HCT116 (cell line): ENCODE measurements at regions of chr6 and their contacts with region 1.

Region 1: DNA sequence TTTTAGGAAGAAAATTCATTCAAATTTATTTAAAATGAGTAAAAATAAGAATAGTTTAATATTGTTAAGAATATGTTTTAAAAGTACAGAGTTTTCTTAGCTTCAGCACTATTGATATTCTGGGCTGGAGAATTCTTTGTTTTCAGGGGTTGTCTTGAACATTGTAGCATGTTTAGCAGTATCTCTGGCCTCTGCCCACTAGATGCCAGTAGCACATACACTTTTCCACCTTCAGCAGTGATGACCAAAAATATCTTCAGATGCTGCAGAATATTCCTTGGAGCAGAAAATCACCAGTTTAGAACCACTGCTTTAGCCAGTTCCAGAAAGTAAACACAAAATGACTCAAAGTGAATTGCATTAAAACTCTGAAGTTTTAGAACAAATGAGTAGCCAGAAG is 19.4 kb upstream of the SDHAF4 start:
- DNase-seq: no peak
- ATAC-seq: peak; percentile 63
- H3K4me3 ChIP-seq: no peak overlapping the region
- H3K27ac ChIP-seq: no peak overlapping the region
- H3K4me1 ChIP-seq: no peaks in the 10 kb centered on the region
- H3K27me3 ChIP-seq: no peaks in the 10 kb centered on the region
- CTCF ChIP-seq: peak; percentile 19 to 49 (median 35); a peak in 4 of 6 replicates
- POLR2A ChIP-seq: no peak
- RAD21 ChIP-seq: peak; percentile 53

Region 2: DNA sequence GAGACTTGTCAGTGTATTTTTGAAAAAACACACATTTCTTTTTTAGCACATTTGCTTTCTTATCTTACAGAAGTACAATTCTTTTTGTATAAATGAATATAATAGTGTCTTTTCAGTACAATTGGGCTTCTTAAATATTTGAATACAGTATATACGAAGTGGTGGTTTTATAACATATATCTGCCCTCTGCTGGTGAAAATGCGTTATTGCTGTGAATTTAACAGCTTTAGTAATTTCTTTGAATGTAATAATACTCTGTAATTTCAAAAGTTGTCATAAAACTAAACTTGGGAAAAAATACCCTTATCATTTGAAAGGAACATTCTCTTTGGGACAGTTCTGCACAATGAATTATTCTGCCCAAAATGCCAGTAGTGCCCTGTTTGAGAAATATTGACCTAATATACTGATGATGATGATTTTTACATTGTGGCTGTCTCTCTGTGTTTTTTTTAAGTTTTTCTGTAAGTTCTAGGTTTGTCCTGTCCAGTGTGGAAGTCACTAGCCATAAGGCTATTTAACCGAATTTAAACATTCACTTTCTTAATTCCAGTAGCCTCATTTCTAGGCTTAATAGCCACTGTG is 139.3 kb after region 1 on chr6:
- CTCF ChIA-PET with region 1: interaction called, 10 read pairs
- POLR2A ChIA-PET with region 1: no interaction called
- RAD21 ChIA-PET with region 1: no interaction called
- intact Hi-C with region 1: loop called (anchors 2 kb)
- DNase-seq: no peak
- ATAC-seq: peak; percentile 62; the same call in 1 of the 2 replicates
- H3K4me3 ChIP-seq: no peak overlapping the region
- H3K27ac ChIP-seq: no peak overlapping the region
- H3K4me1 ChIP-seq: peaks cover 0 to 4% of the 10 kb centered on the region in 2 experiments; a peak in 1 of 4 replicates
- H3K27me3 ChIP-seq: no peaks in the 10 kb centered on the region
- CTCF ChIP-seq: peak; percentile 45 to 78 (median 58); a peak in 4 of 6 replicates
- POLR2A ChIP-seq: no peak
- RAD21 ChIP-seq: peak; percentile 65

Region 3: DNA sequence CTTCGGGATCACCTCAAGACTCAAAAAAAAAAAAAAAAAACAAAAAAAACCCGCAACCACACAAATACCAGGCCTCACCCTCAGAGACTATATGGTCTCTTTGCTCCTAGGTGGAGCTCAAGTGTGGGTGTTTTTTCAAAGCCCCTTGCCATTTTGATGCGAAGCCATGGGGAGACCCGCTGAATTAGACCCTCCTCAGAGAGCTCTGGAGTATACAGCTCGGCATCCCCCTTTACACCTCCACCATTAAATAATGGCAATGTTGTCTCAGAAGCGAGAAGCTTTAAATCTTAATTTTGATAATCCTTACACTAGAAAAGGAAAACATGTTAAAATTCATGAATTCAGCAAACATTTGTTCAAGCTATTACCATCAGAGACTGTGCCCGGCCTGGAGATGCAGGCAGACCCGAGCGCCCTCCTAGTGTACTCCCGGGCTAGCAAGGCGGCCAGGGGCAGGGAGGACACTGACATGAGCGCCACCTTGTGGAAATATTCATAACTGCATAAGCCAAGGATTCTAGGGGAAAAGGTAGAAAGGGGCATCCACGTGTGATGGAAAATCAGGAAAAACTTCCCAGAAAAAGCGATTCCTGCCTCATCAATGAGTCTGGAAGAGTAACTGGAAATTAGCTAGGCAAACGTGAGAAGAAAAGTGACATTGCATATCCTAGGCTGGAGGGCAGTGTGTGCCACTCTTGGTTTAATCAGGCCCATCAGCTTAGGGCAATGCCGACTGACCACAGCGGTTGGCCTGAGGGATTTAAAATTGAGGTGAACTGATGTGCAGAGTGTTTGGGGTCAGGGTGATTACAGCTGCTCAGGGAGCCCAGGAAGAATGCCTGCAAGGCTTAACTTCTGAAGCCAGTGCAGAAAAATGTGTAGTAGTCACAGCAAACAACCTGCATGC is 337.0 kb after region 1 on chr6:
- CTCF ChIA-PET with region 1: no interaction called
- POLR2A ChIA-PET with region 1: no interaction called
- RAD21 ChIA-PET with region 1: no interaction called
- intact Hi-C with region 1: loop called (anchors 1 kb)
- DNase-seq: peak; percentile 32
- ATAC-seq: peak; percentile 98
- H3K4me3 ChIP-seq: no peak overlapping the region
- H3K27ac ChIP-seq: no peak overlapping the region
- H3K4me1 ChIP-seq: no peaks in the 10 kb centered on the region
- H3K27me3 ChIP-seq: no peaks in the 10 kb centered on the region
- CTCF ChIP-seq: peak; percentile 80 to 90 (median 90)
- POLR2A ChIP-seq: no peak
- RAD21 ChIP-seq: peak; percentile 86